Mammary epithelial cell (primary cell): ENCODE measurements at regions of chrX and their contacts with region 1.

Region 1: DNA sequence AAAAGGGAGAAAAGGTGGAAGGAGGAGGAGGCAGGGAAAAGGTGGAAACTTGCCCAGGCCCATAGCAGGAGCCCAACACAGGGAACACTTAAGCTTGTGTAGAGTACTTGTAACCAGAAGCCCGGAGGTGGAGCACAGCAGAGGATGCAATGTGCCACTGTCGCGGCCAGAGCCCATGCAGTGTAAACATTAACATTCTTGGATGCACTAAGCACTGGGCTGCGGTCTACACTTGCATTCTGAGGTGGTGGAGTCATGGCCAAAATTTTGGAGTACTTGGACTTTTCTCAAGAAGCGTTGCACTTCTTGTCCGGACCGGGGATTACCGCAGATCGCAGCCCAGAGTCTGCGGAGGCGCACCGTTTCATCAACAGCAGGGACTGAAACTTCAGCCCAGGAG is 4.5 kb upstream of the RHOXF1 start:
- DNase-seq: no peak
- H3K4me3 ChIP-seq: no peak overlapping the region
- H3K27ac ChIP-seq: no peak overlapping the region
- H3K4me1 ChIP-seq: no peaks in the 10 kb centered on the region
- H3K27me3 ChIP-seq: no peaks in the 10 kb centered on the region
- CTCF ChIP-seq: no peak

Region 2: GRCh38 chrX:119981286-119982070 is 138.7 kb before region 1 on chrX:
- CTCF ChIA-PET with region 1: no interaction called
- dilution Hi-C with region 1: loop called (anchors 25 kb)
- in situ Hi-C with region 1: no loop called
- intact Hi-C with region 1: no loop called
- DNase-seq: peak; percentile 20
- H3K4me3 ChIP-seq: no peak overlapping the region
- H3K27ac ChIP-seq: no peak overlapping the region
- H3K4me1 ChIP-seq: no peaks in the 10 kb centered on the region
- H3K27me3 ChIP-seq: no peaks in the 10 kb centered on the region
- CTCF ChIP-seq: peak; percentile 45 to 57

Region 3: GRCh38 chrX:120015145-120016067 is 104.8 kb before region 1 on chrX:
- CTCF ChIA-PET with region 1: no interaction called
- dilution Hi-C with region 1: no loop called
- in situ Hi-C with region 1: loop called in 1 of 2 experiments (anchors 25 kb)
- intact Hi-C with region 1: no loop called
- DNase-seq: no peak
- H3K4me3 ChIP-seq: peak overlapping the region in 1 of 3 experiments; percentile 23
- H3K27ac ChIP-seq: no peak overlapping the region
- H3K4me1 ChIP-seq: no peaks in the 10 kb centered on the region
- H3K27me3 ChIP-seq: peaks cover 10% of the 10 kb centered on the region
- CTCF ChIP-seq: no peak

Region 4: DNA sequence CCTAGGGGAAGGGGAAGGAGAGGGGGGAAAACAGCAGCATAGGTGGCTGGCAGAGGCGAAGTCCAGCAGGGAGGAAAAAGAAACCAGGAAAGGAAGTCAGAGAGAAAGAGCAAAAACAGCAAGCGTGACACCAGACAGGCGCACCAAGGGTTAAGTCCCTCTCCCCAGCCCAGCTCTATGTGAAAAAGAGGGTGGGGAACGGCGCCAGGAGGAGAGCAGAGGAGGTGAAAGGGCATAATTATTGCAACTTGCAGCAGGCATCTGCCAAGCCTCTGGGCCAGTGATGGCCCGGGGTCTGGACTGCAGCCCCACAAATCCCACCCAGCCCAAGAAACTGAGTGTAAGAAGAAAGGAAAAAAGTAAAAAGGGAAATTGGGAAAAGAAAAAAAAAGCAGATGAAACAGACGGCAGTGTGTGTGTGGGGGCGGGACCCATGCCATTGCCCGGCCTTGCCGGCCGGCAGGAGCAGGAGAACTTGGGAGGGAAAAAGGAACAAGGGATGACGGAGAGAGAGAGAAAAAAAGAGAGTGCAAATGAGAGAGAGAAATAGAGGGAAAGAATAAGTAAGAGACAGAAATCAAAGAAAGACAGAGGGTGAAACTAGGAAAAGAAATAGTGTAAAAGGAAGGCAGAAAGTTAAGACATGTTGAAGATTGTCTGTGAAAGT is 24.1 kb after region 1 on chrX:
- CTCF ChIA-PET with region 1: no interaction called
- dilution Hi-C with region 1: no loop called
- in situ Hi-C with region 1: no loop called
- intact Hi-C with region 1: no loop called
- DNase-seq: no peak
- H3K4me3 ChIP-seq: no peak overlapping the region
- H3K27ac ChIP-seq: no peak overlapping the region
- H3K4me1 ChIP-seq: no peaks in the 10 kb centered on the region
- H3K27me3 ChIP-seq: peaks cover 4% of the 10 kb centered on the region
- CTCF ChIP-seq: no peak

Region 5: DNA sequence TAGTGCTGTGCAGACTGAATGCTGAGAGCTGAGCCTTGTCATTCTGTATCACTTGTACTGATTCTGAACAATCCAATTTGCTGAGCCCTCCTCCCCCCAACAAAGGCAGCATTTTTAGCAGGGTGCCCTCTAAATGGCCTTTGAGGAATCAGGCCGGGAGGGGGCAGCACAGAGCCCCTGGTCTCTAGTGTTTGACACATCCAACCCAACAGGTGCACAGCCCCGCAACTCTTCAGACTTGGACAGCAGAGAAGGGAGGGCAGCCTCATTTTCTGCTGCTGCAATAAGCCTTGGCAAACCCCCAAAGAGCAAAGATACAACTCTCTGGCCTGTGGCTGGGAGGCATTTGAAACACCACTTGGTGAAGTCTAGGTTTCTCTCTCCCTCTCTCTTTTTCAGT is 245.1 kb after region 1 on chrX:
- CTCF ChIA-PET with region 1: no interaction called
- dilution Hi-C with region 1: no loop called
- in situ Hi-C with region 1: no loop called
- intact Hi-C with region 1: no loop called
- DNase-seq: no peak
- H3K4me3 ChIP-seq: no peak overlapping the region
- H3K27ac ChIP-seq: no peak overlapping the region
- H3K4me1 ChIP-seq: no peaks in the 10 kb centered on the region
- H3K27me3 ChIP-seq: no peaks in the 10 kb centered on the region
- CTCF ChIP-seq: peak; percentile 38 to 57